GM12878 (cell line): ENCODE measurements at regions of chr11 and their contacts with region 1.

Region 1: GRCh38 chr11:83681031-83681781 is 395.0 kb upstream of the CCDC90B start:
- DNase-seq: no peak
- ATAC-seq: peak; percentile 69
- H3K4me3 ChIP-seq: peak overlapping the region; percentile 60; the same call in 1 of the 2 replicates
- H3K27ac ChIP-seq: peak overlapping the region; percentile 28
- H3K4me1 ChIP-seq: peaks cover 16% of the 10 kb centered on the region
- H3K27me3 ChIP-seq: no peaks in the 10 kb centered on the region
- CTCF ChIP-seq: no peak
- EP300 ChIP-seq: no peak
- POLR2A ChIP-seq: no peak
- RAD21 ChIP-seq: no peak

Region 2: DNA sequence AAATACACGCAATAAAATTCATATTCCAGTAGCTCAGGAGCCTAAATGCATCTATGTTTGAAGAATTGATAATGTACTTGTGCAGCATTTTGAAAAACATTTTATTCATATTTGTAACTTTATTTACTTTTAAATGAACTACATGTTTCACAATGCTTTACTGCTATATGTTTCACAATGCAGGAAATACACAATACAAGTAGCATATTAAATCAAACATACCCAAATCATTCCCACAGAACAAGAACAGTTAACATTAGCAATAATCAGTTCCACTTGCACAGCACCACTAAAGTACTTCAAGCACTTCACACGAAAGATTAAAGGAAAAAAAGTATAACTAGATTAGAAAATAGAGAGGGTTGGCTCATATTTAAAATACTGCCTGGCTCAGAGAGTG is 51.4 kb before region 1 on chr11:
- CTCF ChIA-PET with region 1: no interaction called
- POLR2A ChIA-PET with region 1: no interaction called
- RAD21 ChIA-PET with region 1: no interaction called
- SMC1A ChIA-PET with region 1: no interaction called
- in situ Hi-C with region 1: no loop called
- intact Hi-C with region 1: loop called (anchors 5 kb)
- DNase-seq: no peak
- ATAC-seq: no peak
- H3K4me3 ChIP-seq: no peak overlapping the region
- H3K27ac ChIP-seq: no peak overlapping the region
- H3K4me1 ChIP-seq: no peaks in the 10 kb centered on the region
- H3K27me3 ChIP-seq: no peaks in the 10 kb centered on the region
- CTCF ChIP-seq: no peak
- EP300 ChIP-seq: no peak
- POLR2A ChIP-seq: no peak
- RAD21 ChIP-seq: no peak

Region 3: GRCh38 chr11:83663446-83663845 is 17.8 kb before region 1 on chr11:
- CTCF ChIA-PET with region 1: no interaction called
- POLR2A ChIA-PET with region 1: no interaction called
- RAD21 ChIA-PET with region 1: no interaction called
- SMC1A ChIA-PET with region 1: no interaction called
- in situ Hi-C with region 1: no loop called
- intact Hi-C with region 1: no loop called
- DNase-seq: no peak
- ATAC-seq: no peak
- H3K4me3 ChIP-seq: no peak overlapping the region
- H3K27ac ChIP-seq: no peak overlapping the region
- H3K4me1 ChIP-seq: no peaks in the 10 kb centered on the region; the same call in 1 of the 2 replicates
- H3K27me3 ChIP-seq: no peaks in the 10 kb centered on the region; a peak in 1 of 4 replicates
- CTCF ChIP-seq: no peak
- EP300 ChIP-seq: no peak
- POLR2A ChIP-seq: no peak
- RAD21 ChIP-seq: no peak

Region 4: DNA sequence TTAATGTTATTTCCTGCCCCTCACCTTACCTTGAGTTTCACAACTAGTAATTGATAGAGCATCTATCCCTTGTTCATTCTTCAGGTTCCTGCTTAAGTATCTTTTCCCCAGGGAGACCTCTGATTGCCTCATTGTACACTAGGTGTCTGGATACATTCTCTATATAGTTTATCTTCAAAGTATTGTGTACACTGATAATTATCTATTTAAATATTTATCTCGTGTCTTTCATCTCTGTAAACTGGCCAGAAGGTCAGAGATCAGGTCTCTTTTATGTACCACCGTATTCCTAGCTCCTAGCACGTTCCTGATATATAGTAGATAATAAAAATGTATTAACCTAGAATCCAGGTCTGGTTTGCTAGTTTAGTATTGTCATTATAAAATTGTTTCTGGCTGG is 1953.5 kb after region 1 on chr11:
- CTCF ChIA-PET with region 1: no interaction called
- POLR2A ChIA-PET with region 1: no interaction called
- RAD21 ChIA-PET with region 1: no interaction called
- SMC1A ChIA-PET with region 1: no interaction called
- in situ Hi-C with region 1: no loop called
- intact Hi-C with region 1: no loop called
- DNase-seq: no peak
- ATAC-seq: no peak
- H3K4me3 ChIP-seq: no peak overlapping the region
- H3K27ac ChIP-seq: no peak overlapping the region
- H3K4me1 ChIP-seq: peaks cover 4% of the 10 kb centered on the region; the same call in 1 of the 2 replicates
- H3K27me3 ChIP-seq: no peaks in the 10 kb centered on the region
- CTCF ChIP-seq: no peak
- EP300 ChIP-seq: no peak
- POLR2A ChIP-seq: no peak
- RAD21 ChIP-seq: no peak